CD8-positive, alpha-beta T cell (primary cell): ENCODE measurements at regions of chr17 and their contacts with region 1.

Region 1: DNA sequence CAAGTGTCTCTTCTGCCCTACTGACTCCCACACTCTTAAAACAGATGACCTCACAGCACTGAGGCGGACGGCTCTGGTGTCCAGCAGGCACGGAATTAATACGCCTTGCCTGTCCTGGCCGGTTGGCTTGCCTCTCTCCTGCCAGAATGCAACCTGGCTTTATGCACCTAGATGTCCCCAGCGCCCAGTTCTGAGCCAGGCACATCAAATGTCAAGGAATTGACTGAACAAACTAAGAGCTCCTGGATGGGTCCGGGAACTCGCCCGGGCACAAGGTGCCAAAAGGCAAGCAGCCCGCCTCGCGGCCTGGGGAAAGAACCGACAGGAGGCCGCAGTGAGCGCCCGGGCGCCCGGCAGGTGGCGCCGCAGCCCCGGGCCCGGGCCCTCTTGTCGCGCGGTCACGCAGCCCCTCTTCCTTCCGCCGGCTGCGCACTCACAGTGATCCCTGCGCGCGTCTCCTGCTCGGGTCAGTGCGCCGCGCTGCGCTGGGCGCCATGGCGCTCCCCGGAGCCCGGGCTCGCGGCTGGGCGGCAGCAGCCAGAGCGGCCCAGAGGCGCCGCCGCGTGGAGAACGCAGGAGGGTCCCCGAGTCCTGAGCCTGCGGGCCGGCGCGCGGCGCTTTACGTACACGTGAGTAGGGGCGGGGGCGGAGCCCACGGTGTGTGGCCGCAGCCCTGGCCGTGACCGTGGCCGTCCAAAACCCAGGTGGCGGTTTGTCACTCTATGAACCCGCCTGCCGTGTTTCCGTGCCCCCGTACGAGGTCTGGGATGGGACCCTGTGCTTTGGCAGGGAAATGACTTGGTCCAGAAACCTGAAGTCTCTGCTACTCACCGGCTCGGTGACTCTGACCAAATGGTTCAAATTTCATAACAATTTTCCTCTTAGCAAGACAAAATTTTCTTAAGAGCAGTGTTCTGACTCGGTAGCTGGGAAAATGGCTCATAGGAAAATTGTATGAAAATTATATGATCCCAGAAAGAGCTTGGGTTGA is at the start of gene RSAD1:
- DNase-seq: peak; percentile 68 to 94 (median 83)
- ATAC-seq: peak; percentile 90
- H3K4me3 ChIP-seq: peak within 1 kb of the TSS; percentile 71 to 88
- H3K4me3 Mint-ChIP-seq: peak within 1 kb of the TSS; percentile 90
- H3K27ac ChIP-seq: peak within 1 kb of the TSS; percentile 56 to 85
- H3K27ac Mint-ChIP-seq: peak within 1 kb of the TSS; percentile 90
- H3K4me1 ChIP-seq: peaks cover 20% of the 10 kb centered on the region
- H3K4me1 Mint-ChIP-seq: peaks cover 22% of the 10 kb centered on the region
- H3K27me3 ChIP-seq: no peaks in the 10 kb centered on the region
- H3K27me3 Mint-ChIP-seq: peaks cover 3% of the 10 kb centered on the region
- CTCF ChIP-seq: peak; percentile 80
- total RNA-seq, gene RSAD1: 46.4 to 46.9 TPM

Region 2: DNA sequence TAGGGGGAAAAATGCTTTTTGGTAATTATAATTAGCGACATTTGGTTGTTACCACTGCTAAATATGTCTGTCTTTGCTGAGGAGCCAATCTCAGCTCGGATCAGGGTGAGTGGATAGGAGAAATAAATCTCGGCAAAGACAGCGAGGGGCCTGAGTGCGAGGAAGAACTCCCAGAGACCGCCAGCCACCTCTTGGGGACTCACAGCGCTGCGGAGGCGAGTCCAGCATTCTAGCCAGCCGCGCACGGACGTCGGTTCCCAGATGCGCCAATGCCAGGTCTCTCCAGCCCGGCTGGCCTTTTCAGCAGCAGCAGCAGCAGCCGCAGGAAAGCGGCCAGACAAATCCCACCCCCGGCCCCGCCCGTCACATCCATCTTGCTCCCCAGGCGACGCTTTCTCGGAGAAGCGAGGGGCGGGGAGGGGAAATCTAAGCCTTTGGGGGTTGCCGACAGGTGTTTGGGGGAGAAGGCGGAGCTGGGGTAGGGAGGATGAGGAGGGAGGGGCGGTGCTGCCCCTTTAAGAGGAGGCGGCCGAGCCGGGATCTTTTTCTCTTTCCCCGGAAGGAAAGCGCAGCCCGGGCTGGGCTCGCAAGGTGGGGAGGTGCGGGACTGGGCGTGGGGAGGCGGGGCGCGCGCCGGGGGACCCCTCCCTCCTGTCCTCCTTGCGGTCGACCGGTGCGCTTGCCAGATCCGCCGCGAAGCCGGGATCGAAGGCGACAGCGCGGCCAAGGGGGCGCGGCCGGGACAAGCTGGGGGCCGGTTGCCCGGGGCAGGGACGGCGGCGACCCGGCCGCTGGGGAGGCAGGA is 423.1 kb before region 1 on chr17 and contains the start of gene ITGA3:
- CTCF ChIA-PET with region 1: no interaction called
- POLR2A ChIA-PET with region 1: no interaction called
- intact Hi-C with region 1: no loop called
- DNase-seq: peak in 8 of 9 experiments; percentile 36 to 72 (median 63)
- ATAC-seq: peak; percentile 69
- H3K4me3 ChIP-seq: peak within 1 kb of the TSS; percentile 64 to 67
- H3K4me3 Mint-ChIP-seq: peak within 1 kb of the TSS; percentile 89
- H3K27ac ChIP-seq: no peak within 1 kb of the TSS
- H3K27ac Mint-ChIP-seq: peak within 1 kb of the TSS; percentile 72
- H3K4me1 ChIP-seq: peaks cover 9% of the 10 kb centered on the region
- H3K4me1 Mint-ChIP-seq: peaks cover 19% of the 10 kb centered on the region
- H3K27me3 ChIP-seq: no peaks in the 10 kb centered on the region
- H3K27me3 Mint-ChIP-seq: no peaks in the 10 kb centered on the region
- CTCF ChIP-seq: no peak
- total RNA-seq, gene ITGA3: 1.6 to 2.0 TPM

Region 3: DNA sequence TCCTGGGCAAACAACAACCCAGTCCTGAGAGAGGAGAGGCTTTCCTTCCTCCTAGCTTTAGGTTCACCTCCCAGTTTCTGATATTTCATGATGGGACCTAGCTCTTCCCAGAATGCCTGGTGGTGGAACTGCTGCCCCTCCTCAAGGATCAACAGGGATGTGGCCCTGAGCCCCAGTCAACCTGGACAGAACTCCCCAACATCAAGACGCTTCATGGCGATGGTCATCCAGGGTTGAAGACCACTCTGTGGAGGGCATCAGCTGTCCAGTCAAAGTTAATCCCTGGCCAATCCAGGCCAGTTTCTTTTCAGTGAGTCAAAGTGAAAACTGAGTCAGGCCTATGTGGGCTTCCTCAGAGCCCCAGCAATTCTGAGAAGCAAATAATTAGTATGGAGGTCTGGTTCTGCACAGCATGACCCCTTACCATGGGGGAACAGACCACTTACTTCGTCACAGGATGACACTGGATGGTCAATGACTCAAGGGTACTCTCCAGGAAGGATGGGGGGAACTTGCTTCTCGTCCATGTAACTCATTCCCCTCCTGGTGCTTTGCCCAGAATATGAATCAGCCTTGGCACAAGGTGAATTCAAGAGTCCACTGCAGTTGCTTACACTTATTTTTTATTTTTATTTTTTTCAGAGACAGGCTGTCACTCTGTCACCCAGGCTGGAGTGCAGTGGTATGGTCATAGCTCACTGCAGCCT is 147.4 kb before region 1 on chr17:
- CTCF ChIA-PET with region 1: no interaction called
- POLR2A ChIA-PET with region 1: no interaction called
- intact Hi-C with region 1: no loop called
- DNase-seq: no peak
- ATAC-seq: no peak
- H3K4me3 ChIP-seq: no peak overlapping the region
- H3K4me3 Mint-ChIP-seq: no peak overlapping the region
- H3K27ac ChIP-seq: no peak overlapping the region
- H3K27ac Mint-ChIP-seq: no peak overlapping the region
- H3K4me1 ChIP-seq: peaks cover 4% of the 10 kb centered on the region
- H3K4me1 Mint-ChIP-seq: peaks cover 7% of the 10 kb centered on the region
- H3K27me3 ChIP-seq: no peaks in the 10 kb centered on the region
- H3K27me3 Mint-ChIP-seq: peaks cover 14% of the 10 kb centered on the region
- CTCF ChIP-seq: no peak

Region 4: GRCh38 chr17:50361561-50362480 is 116.9 kb before region 1 on chr17:
- CTCF ChIA-PET with region 1: interaction called, 13 read pairs
- POLR2A ChIA-PET with region 1: no interaction called
- intact Hi-C with region 1: loop called in 1 of 2 experiments (anchors 1 kb)
- DNase-seq: peak in 8 of 9 experiments; percentile 32 to 83 (median 59)
- ATAC-seq: peak; percentile 94
- H3K4me3 ChIP-seq: no peak overlapping the region
- H3K4me3 Mint-ChIP-seq: peak overlapping the region; percentile 49
- H3K27ac ChIP-seq: peak overlapping the region in 1 of 2 experiments; percentile 32
- H3K27ac Mint-ChIP-seq: peak overlapping the region; percentile 70
- H3K4me1 ChIP-seq: peaks cover 6% of the 10 kb centered on the region
- H3K4me1 Mint-ChIP-seq: peaks cover 22% of the 10 kb centered on the region
- H3K27me3 ChIP-seq: no peaks in the 10 kb centered on the region
- H3K27me3 Mint-ChIP-seq: no peaks in the 10 kb centered on the region
- CTCF ChIP-seq: peak; percentile 79

Region 5: GRCh38 chr17:50425682-50426471 is 52.8 kb before region 1 on chr17 and contains the start of gene ACSF2:
- CTCF ChIA-PET with region 1: no interaction called
- POLR2A ChIA-PET with region 1: no interaction called
- intact Hi-C with region 1: loop called (anchors 1 to 2 kb)
- DNase-seq: peak; percentile 39 to 79 (median 67)
- ATAC-seq: peak; percentile 85
- H3K4me3 ChIP-seq: peak within 1 kb of the TSS; percentile 76 to 77
- H3K4me3 Mint-ChIP-seq: peak within 1 kb of the TSS; percentile 87
- H3K27ac ChIP-seq: peak within 1 kb of the TSS; percentile 21 to 75
- H3K27ac Mint-ChIP-seq: peak within 1 kb of the TSS; percentile 79
- H3K4me1 ChIP-seq: peaks cover 28% of the 10 kb centered on the region
- H3K4me1 Mint-ChIP-seq: peaks cover 35% of the 10 kb centered on the region
- H3K27me3 ChIP-seq: no peaks in the 10 kb centered on the region
- H3K27me3 Mint-ChIP-seq: no peaks in the 10 kb centered on the region
- CTCF ChIP-seq: no peak
- total RNA-seq, gene ACSF2: 12.5 to 12.9 TPM

Region 6: GRCh38 chr17:50541716-50542688 is 63.3 kb after region 1 on chr17:
- CTCF ChIA-PET with region 1: interaction called, 12 read pairs
- POLR2A ChIA-PET with region 1: no interaction called
- intact Hi-C with region 1: loop called (anchors 1 to 2 kb)
- DNase-seq: peak; percentile 52 to 89 (median 82)
- ATAC-seq: peak; percentile 86
- H3K4me3 ChIP-seq: peak overlapping the region; percentile 69 to 74
- H3K4me3 Mint-ChIP-seq: peak overlapping the region; percentile 83
- H3K27ac ChIP-seq: peak overlapping the region in 1 of 2 experiments; percentile 29
- H3K27ac Mint-ChIP-seq: peak overlapping the region; percentile 70
- H3K4me1 ChIP-seq: peaks cover 20% of the 10 kb centered on the region
- H3K4me1 Mint-ChIP-seq: peaks cover 17% of the 10 kb centered on the region
- H3K27me3 ChIP-seq: no peaks in the 10 kb centered on the region
- H3K27me3 Mint-ChIP-seq: peaks cover 6% of the 10 kb centered on the region
- CTCF ChIP-seq: peak; percentile 32

Region 7: GRCh38 chr17:50697663-50698274 is 219.1 kb after region 1 on chr17:
- CTCF ChIA-PET with region 1: interaction called, 4 read pairs
- POLR2A ChIA-PET with region 1: no interaction called
- intact Hi-C with region 1: loop called (anchors 5 kb)
- DNase-seq: peak in 1 of 9 experiments; percentile 28
- ATAC-seq: no peak
- H3K4me3 ChIP-seq: no peak overlapping the region
- H3K4me3 Mint-ChIP-seq: no peak overlapping the region
- H3K27ac ChIP-seq: no peak overlapping the region
- H3K27ac Mint-ChIP-seq: peak overlapping the region; percentile 39
- H3K4me1 ChIP-seq: no peaks in the 10 kb centered on the region
- H3K4me1 Mint-ChIP-seq: peaks cover 19% of the 10 kb centered on the region
- H3K27me3 ChIP-seq: no peaks in the 10 kb centered on the region
- H3K27me3 Mint-ChIP-seq: no peaks in the 10 kb centered on the region
- CTCF ChIP-seq: no peak